Astrocyte of the cerebellum (primary cell): ENCODE measurements at regions of chr11 and their contacts with region 1.

Region 1: GRCh38 chr11:128463371-128463829 is 124.0 kb downstream of the ETS1 start:
- DNase-seq: no peak
- H3K4me3 ChIP-seq: no peak overlapping the region
- CTCF ChIP-seq: no peak

Region 2: DNA sequence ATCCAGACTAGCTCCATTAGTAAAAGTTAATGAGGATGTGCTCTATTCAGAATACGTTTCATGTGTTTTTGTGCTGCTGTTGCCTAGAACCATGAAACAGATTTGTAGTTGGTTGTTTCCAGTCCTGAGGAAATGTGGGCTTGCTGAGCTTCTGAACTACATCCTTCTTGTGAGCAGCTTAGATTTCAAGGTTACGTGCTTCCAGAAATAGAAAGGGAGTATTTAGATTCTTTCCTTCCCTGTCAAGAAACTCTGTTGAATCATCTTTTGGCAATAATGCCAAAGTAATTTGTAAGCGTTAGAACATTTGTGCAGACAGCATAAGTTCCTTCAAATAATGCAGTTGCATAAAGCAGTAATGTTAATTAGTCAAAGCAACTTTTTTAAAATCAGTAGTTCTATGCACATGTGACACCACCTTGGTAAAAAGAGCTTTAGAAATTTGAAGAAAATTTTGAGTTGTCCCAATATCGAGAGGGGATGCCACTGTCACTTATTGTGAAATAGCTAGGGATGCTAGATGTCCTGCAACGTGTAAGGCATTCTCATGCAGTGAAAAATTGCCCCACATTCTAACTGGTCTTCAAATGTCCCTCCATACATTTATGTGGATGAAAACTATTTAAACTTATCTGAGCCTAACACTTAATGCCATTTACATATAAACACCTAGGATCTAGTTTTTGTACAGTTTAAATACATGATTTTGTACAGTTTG is 45.6 kb before region 1 on chr11:
- in situ Hi-C with region 1: loop called (anchors 5 kb)
- DNase-seq: peak; percentile 37
- H3K4me3 ChIP-seq: no peak overlapping the region
- CTCF ChIP-seq: no peak